ENCODE measurements at regions of chr3 and their contacts with region 1.

Region 1: GRCh38 chr3:193851941-193852674 is 259.1 kb downstream of the OPA1 start:
- DNase-seq: peak; percentile 82 to 98
- H3K4me3 ChIP-seq: peak overlapping the region; percentile 49
- H3K27ac ChIP-seq: peak overlapping the region; percentile 98
- H3K4me1 ChIP-seq: peaks cover 70% of the 10 kb centered on the region
- H3K27me3 ChIP-seq: no peaks in the 10 kb centered on the region
- CTCF ChIP-seq: no peak

Region 2: DNA sequence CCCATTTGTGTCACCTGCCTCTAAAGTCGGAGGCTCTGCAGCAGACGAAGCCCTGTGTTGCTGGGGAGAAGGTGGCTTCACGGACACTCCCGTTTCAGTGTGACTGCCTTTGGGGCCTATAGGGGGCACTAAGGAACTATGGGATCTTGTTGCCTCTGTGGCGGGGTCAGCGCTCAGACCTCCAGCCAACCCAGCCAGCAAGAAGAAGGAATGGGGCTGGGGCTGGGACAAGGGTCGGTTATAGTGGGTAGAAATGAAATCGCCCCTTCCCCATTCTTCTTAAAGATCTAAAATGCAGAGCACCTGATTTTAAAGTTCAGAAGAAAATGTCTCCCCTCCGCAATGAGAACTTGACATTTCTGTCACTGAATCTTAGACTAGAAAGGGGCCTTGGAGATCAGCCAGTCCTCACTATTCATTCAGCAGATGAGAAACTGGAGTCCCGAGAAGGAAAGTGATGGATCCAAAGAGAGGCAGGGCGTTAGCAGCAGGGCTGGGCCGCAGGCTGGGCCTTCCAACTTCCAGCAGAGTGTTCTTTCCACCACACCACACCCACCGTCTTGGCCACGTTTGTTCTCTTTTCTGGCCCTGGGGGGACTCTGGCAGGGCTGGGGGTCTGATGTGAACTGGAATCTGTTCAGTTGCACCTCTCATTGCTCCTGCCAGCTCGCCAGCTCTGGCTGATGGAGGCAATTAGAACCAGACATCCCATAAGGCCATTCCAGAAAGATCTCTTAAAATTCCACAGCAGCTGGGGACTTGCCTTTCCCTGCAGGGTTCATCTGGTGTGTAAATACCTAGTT is 63.7 kb before region 1 on chr3:
- CTCF ChIA-PET with region 1: no interaction called
- POLR2A ChIA-PET with region 1: interaction called, 3 read pairs
- intact Hi-C with region 1: loop called (anchors 2 kb)
- DNase-seq: peak in 1 of 2 experiments; percentile 55
- H3K4me3 ChIP-seq: no peak overlapping the region
- H3K27ac ChIP-seq: no peak overlapping the region
- H3K4me1 ChIP-seq: peaks cover 47% of the 10 kb centered on the region
- H3K27me3 ChIP-seq: no peaks in the 10 kb centered on the region
- CTCF ChIP-seq: peak; percentile 43; the same call in 1 of the 2 replicates

Region 3: DNA sequence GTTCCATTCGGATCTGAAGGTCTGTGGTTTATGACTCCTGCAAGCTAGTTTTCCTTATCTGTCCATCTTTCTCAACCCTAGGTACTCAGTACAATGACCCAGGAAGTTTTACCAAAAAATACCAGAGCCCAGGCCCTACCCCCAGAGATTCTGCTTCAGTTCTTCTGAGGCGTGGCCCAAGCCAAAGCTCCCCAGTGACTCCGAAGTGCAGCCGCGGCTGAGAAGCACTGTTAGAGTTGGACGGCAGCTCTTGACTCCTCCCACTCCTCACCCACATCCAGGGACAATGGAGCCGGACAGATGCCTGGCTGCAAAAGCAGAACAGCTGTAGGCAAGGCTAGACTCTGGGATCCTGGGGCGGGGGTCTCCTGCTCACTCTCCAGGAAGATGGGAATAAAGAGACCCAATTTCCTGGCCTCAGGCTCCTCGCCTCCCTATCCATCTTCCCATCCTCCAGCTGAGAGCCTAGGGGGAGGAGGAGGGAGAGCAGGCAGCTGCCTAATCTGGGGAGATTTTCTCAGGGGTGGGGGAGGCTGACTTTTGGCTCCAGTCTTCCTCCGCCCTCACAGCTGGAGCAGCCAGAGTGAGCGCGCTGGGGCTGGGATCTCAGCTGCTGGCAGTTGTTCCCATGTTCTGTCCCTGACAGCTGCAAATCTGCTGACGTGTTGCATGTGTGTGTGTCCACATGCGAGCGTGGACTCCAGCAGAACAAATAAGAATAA is 35.4 kb before region 1 on chr3:
- CTCF ChIA-PET with region 1: no interaction called
- POLR2A ChIA-PET with region 1: interaction called, 3 read pairs
- intact Hi-C with region 1: loop called (anchors 1 kb)
- DNase-seq: peak; percentile 94 to 97
- H3K4me3 ChIP-seq: no peak overlapping the region; the same call in 1 of the 2 replicates
- H3K27ac ChIP-seq: peak overlapping the region; percentile 47
- H3K4me1 ChIP-seq: peaks cover 67% of the 10 kb centered on the region
- H3K27me3 ChIP-seq: no peaks in the 10 kb centered on the region
- CTCF ChIP-seq: no peak

Region 4: GRCh38 chr3:193883551-193883950 is 31.4 kb after region 1 on chr3:
- CTCF ChIA-PET with region 1: no interaction called
- POLR2A ChIA-PET with region 1: interaction called, 8 read pairs
- intact Hi-C with region 1: loop called (anchors 1 kb)
- DNase-seq: peak; percentile 58 to 85
- H3K4me3 ChIP-seq: no peak overlapping the region
- H3K27ac ChIP-seq: peak overlapping the region; percentile 81
- H3K4me1 ChIP-seq: peaks cover 88% of the 10 kb centered on the region
- H3K27me3 ChIP-seq: no peaks in the 10 kb centered on the region
- CTCF ChIP-seq: no peak

Region 5: DNA sequence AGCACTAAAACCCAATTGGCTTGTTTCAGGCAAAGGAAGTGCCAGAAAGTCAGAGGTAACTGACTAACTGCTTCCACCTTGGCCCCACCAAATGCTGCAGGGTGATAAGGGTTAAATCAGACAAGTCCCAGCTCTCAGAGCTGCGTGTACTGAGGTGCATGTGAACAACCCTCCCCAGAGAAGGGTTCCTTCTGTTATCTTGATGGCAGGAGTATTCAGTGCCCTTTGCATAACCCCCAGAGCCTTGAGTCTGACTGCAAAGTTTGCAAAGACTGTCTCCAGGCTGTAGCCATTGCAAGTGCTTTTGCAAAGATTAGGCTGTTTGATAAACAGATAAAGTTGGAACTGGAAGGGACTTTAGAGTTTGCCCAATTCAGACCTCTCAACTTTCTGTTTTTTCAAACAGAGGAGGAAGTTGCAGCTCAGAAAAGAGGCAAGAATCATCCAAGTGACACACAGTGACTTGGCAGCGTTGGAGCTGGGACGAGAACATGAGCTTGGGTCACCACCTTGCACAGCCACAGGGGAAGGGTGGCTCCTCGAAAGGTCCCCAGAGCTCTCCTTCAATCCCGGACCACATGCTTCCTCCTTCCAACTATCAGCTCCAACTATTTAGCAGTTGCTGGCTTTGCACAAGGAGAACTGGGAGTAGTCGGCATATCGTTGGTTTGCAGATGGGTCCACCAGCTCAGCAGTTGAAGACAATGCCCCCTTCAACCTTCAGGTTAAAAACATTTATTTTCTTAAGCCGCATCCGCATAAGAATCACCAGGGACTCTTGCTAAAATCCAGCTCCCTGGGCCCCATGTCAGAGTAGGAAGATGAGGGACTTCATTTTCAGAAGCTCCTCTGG is 59.0 kb after region 1 on chr3:
- CTCF ChIA-PET with region 1: no interaction called
- POLR2A ChIA-PET with region 1: no interaction called
- intact Hi-C with region 1: loop called (anchors 2 kb)
- DNase-seq: peak; percentile 63 to 94
- H3K4me3 ChIP-seq: no peak overlapping the region
- H3K27ac ChIP-seq: peak overlapping the region; percentile 69
- H3K4me1 ChIP-seq: peaks cover 26% of the 10 kb centered on the region
- H3K27me3 ChIP-seq: no peaks in the 10 kb centered on the region
- CTCF ChIP-seq: no peak

Region 6: GRCh38 chr3:194089357-194090177 is 237.5 kb after region 1 on chr3:
- CTCF ChIA-PET with region 1: no interaction called
- POLR2A ChIA-PET with region 1: no interaction called
- intact Hi-C with region 1: loop called (anchors 2 kb)
- DNase-seq: peak; percentile 98 to 100
- H3K4me3 ChIP-seq: peak overlapping the region; percentile 16; the same call in 1 of the 2 replicates
- H3K27ac ChIP-seq: peak overlapping the region; percentile 98
- H3K4me1 ChIP-seq: peaks cover 48% of the 10 kb centered on the region
- H3K27me3 ChIP-seq: no peaks in the 10 kb centered on the region
- CTCF ChIP-seq: no peak

Region 7: DNA sequence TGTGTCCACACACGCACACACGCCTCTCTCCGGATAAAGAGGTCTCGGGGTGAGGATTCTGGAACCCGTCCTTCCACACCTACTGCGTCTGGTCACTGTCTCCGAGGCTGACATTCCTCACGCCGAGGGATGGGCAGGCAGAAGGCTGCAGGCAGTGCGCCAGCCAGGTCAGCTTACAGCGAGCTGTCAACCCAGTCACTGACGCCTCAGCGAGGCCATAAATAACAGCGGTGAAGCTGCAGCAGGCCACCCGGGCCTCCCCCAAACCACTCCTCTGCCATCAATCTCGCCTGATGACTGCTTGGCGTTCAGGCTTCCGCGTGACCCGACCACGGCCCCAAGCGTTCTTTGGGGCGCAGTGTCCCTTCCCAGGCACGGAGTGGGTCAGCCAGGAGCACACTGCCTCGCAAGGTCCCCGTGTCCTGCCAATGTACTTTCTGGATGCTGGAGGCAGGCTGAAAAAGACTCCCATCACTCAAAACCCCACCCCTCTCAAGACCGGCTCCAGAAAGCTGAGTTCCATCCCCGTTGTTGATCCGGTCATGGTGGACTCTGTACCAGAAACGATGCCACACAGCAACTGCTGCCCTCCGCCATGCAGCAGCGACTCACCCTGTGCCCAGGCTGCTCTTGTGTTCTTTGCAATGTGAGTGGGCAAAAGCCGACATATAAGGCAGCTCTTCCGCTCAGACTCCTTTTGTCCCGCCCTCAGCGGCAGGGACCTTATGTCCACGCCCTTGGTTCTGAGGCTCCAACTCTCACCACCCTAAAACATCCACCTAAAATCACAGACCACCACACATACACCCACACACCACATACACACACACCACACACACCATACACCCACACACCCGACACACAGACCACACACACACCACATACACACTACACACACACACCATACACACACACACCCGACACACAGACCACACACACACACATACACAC is 472.0 kb after region 1 on chr3:
- CTCF ChIA-PET with region 1: no interaction called
- POLR2A ChIA-PET with region 1: interaction called, 3 read pairs
- intact Hi-C with region 1: loop called (anchors 1 kb)
- DNase-seq: peak; percentile 60 to 72
- H3K4me3 ChIP-seq: no peak overlapping the region
- H3K27ac ChIP-seq: peak overlapping the region; percentile 98
- H3K4me1 ChIP-seq: peaks cover 39% of the 10 kb centered on the region
- H3K27me3 ChIP-seq: no peaks in the 10 kb centered on the region
- CTCF ChIP-seq: no peak

Measured in PC-9 (cell line).